GM10248 (cell line): ENCODE measurements at regions of chr6 and their contacts with region 1.

Region 1: GRCh38 chr6:98335594-98335993 is 498.8 kb upstream of the POU3F2 start:
- DNase-seq: no peak
- CTCF ChIP-seq: no peak

Region 2: DNA sequence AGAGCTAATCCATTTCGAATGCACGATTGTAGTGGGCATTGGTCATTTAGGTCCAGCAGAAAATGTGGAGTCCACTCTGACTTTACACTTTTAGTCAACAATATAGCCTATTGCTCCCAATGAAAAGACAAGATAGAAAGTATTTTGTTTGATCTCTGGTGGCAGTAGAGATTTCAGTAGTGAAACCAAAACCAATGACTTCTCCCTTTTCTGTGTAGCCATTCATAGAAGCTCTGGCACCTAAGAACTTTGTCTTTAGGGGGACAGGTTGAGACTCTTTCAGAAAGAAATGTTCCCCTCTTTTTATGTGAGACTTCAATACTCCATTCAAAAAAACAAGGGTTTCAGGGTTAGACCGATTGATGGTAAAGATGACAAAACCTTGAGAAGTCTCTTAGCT is 12.0 kb before region 1 on chr6:
- CTCF ChIA-PET with region 1: interaction called, 10 read pairs
- POLR2A ChIA-PET with region 1: no interaction called
- DNase-seq: no peak
- CTCF ChIP-seq: no peak

Region 3: DNA sequence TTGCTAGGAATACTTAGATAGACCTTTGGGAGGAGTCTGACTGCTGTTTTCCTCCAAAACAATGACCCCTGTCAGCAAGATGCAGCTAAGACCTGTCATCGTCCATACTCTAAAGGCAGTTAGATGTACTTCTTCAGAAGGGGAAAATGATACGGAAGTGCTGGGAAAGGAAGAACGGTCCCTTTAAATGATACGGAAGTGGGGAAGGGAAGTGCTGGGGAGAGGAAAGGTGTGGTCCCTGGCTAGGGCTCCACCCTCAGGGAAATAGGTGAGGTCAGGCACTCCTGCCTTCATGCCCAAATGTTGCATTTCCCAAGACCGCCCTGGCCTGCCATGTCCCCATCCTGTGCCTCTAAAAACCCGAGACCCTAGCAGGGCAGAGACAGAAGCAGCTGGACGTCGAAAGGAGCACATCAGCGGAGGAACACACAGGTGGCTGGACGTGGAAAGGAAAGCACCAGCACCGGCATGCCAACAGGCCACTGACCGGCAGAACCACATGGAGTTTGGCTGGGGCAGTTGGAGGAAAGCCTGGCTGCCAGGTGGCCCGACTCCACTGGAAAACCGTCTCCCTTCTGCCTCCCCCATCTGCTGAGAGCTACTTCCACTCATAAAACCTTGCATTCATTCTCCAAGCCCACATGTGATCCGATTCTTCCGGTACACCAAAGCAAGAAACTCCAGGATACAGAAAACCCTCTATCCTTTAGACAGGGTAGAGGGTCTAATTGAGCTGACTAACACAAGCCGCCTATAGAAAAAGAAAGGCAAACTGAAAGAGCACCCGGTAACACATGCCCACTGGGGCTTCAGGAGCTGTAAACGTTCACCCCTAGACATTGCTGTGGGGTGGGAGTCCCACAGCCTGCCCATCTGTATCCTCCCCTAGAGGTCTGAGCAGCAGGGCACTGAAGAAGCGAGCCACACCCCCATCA is 919.3 kb after region 1 on chr6:
- CTCF ChIA-PET with region 1: no interaction called
- POLR2A ChIA-PET with region 1: no interaction called
- DNase-seq: no peak
- CTCF ChIP-seq: no peak